Activated naive CD4-positive, alpha-beta T cell treated with anti-CD3 and anti-CD28 coated beads, Interleukin-2, amount 10 ng/mL, durations not matched to agents 7 days and 5 days (primary cell): ENCODE measurements at regions of chr2 and their contacts with region 1.

Region 1: DNA sequence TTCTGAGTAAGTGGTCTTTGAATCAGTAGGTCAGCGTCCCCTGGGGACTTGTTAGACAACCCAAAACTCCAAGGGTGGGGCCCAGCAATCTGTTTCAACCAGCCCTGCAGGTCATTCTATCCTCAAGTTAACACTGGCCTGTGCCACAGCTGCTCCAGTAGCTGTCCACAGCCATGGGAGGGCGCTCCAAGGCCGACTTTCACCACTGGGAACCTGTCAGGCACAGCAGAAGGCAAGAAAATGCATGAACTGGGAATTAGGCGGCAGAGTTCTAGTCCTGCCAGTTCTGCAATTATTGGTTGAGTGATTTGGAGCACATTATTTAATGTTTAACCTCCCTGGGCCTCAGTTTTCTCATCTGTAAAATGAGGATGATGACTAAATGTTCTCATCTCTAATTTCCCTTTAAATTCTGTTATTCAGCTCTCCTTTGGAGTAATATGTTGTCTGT is 17.4 kb upstream of the MRPL33 start:
- DNase-seq: peak; percentile 87
- H3K4me3 Mint-ChIP-seq: no peak overlapping the region
- H3K27ac Mint-ChIP-seq: no peak overlapping the region
- H3K4me1 Mint-ChIP-seq: peaks cover 4% of the 10 kb centered on the region
- H3K27me3 Mint-ChIP-seq: peaks cover 46% of the 10 kb centered on the region

Region 2: DNA sequence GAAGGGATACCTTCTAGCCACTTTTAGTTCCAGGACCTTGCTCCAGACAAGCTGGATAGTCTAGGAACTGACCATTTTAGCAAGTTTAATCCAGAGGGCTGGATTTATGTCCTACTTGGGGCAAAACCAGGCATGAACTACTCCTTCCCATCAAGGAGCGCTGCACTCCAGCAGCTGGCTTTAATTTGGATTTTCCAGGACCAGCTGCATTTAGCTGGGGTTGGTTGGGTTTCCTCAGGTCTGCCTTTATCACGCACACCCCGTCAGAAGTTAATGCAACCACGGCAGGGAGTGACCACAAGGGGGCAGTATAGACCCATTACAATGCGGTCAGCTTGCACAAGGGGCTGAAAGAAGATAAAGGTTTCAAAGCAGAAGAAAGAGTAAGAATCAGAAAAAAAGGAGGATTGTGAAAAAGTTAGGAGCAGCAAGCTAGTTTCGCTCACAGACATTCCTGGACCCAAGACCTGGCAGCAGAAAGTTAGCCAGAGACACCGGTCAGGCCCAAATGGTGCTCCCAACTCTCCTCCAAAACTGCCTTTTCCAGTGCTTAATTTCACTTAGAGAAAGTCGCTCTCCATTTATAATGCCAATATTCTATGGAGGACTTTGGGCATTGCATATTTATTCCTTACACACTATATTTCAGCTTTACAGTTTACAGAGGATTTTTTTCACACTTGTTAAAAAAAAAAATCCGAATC is 50.4 kb before region 1 on chr2:
- CTCF ChIA-PET with region 1: interaction called, 14 read pairs
- DNase-seq: peak; percentile 91
- H3K4me3 Mint-ChIP-seq: no peak overlapping the region
- H3K27ac Mint-ChIP-seq: no peak overlapping the region
- H3K4me1 Mint-ChIP-seq: peaks cover 10% of the 10 kb centered on the region
- H3K27me3 Mint-ChIP-seq: peaks cover 12% of the 10 kb centered on the region

Region 3: DNA sequence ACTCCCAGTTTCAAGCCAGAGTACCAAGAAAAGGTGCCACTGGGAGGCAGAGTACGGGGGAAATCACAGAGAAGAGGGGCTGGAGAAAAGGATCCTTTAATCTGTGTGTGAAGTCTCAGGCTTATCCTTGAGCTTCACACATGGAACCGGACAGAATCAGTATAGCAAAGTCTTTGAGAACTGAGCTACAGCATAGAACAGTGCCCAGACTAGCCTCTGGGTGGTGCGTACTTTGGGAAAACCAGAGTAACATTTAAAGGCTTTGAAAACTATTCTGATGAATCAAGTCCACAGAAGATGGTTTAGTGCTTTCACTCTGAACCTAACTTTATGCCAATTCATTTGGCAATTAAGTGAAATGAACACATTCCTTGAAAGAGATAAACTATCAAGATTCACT is 219.4 kb after region 1 on chr2:
- CTCF ChIA-PET with region 1: no interaction called
- DNase-seq: no peak
- H3K4me3 Mint-ChIP-seq: no peak overlapping the region
- H3K27ac Mint-ChIP-seq: no peak overlapping the region
- H3K4me1 Mint-ChIP-seq: peaks cover 8% of the 10 kb centered on the region
- H3K27me3 Mint-ChIP-seq: no peaks in the 10 kb centered on the region

Region 4: DNA sequence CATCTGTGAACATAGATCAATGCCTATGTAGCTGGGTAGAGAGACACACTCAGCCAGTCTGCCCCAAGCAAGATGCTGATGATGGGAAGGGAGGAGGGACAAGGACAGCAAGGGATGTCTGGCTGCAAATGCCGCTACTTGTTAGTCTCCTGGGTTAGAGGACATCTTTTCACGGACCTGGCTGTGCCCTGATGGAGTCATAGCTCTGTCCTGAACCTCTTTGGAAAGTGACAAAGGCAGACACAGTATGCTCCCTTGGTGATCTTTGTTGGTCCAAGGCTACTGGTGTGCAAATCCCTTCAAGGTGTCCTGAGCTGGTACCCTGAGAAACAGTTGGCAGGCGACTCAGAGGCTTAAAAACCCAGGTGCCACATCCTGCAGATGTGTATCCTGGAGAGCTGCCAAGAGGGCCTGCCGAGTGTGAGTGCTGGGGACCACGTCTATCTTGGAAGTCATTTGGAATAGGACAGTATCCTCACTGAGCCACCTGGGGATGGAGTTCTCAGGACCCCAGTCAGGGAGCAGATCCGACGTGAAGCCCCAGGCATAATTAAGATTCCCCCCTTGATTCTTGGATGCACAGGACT is 649.3 kb after region 1 on chr2:
- CTCF ChIA-PET with region 1: interaction called, 10 read pairs
- DNase-seq: no peak
- H3K4me3 Mint-ChIP-seq: no peak overlapping the region
- H3K27ac Mint-ChIP-seq: no peak overlapping the region
- H3K4me1 Mint-ChIP-seq: peaks cover 68% of the 10 kb centered on the region
- H3K27me3 Mint-ChIP-seq: no peaks in the 10 kb centered on the region

Region 5: GRCh38 chr2:28452534-28453081 is 698.4 kb after region 1 on chr2:
- CTCF ChIA-PET with region 1: interaction called, 24 read pairs
- DNase-seq: peak; percentile 86
- H3K4me3 Mint-ChIP-seq: no peak overlapping the region
- H3K27ac Mint-ChIP-seq: no peak overlapping the region
- H3K4me1 Mint-ChIP-seq: peaks cover 42% of the 10 kb centered on the region
- H3K27me3 Mint-ChIP-seq: peaks cover 3% of the 10 kb centered on the region